CD4-positive, alpha-beta memory T cell (primary cell): ENCODE measurements at regions of chr17 and their contacts with region 1.

Region 1: DNA sequence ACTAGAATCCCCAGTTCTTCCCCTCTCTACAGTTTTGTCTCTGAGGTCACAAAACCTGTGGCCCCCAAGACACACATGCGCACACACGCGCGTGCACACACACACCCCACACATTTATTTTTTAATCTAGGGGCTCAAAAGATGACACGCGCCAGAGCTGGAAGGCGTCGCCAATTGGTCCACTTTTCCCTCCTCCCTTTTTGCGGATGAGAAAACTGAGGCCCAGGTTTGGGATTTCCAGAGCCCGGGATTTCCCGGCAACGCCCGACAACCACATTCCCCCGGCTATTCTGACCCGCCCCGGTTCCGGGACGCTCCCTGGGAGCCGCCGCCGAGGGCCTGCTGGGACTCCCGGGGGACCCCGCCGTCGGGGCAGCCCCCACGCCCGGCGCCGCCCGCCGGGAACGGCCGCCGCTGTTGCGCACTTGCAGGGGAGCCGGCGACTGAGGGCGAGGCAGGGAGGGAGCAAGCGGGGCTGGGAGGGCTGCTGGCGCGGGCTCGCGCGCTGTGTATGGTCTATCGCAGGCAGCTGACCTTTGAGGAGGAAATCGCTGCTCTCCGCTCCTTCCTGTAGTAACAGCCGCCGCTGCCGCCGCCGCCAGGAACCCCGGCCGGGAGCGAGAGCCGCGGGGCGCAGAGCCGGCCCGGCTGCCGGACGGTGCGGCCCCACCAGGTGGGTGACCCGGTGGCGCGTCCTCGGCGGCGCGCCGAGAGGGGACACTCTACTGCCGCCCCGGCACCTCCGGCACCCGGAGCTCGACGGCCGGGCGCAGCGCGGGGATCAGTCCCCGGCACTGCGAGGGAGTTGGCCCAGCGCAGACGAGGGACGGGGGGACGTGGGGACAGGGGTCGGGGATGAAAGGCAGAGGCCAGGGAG is at the start of gene STAT5A:
- DNase-seq: peak; percentile 81 to 89 (median 83)
- H3K4me3 ChIP-seq: peak within 1 kb of the TSS; percentile 86 to 88
- H3K4me3 Mint-ChIP-seq: peak within 1 kb of the TSS; percentile 90 to 97 (median 94)
- H3K27ac ChIP-seq: peak within 1 kb of the TSS; percentile 87
- H3K27ac Mint-ChIP-seq: peak within 1 kb of the TSS; percentile 92 to 99 (median 97)
- H3K4me1 ChIP-seq: peaks cover 48% of the 10 kb centered on the region
- H3K4me1 Mint-ChIP-seq: peaks cover 37 to 62% (median 47%) of the 10 kb centered on the region in 4 donors
- H3K27me3 ChIP-seq: no peaks in the 10 kb centered on the region
- H3K27me3 Mint-ChIP-seq: no peaks in the 10 kb centered on the region
- total RNA-seq, gene STAT5A: 130 to 133 TPM

Region 2: GRCh38 chr17:42183741-42184711 is 104.1 kb before region 1 on chr17:
- CTCF ChIA-PET with region 1: no interaction called
- POLR2A ChIA-PET with region 1: interaction called, 13 read pairs
- intact Hi-C with region 1: loop called (anchors 2 kb)
- DNase-seq: peak; percentile 74 to 84 (median 75)
- H3K4me3 ChIP-seq: peak overlapping the region; percentile 63 to 86
- H3K4me3 Mint-ChIP-seq: peak overlapping the region; percentile 87 to 96 (median 91)
- H3K27ac ChIP-seq: peak overlapping the region; percentile 72
- H3K27ac Mint-ChIP-seq: peak overlapping the region; percentile 78 to 94 (median 88)
- H3K4me1 ChIP-seq: peaks cover 56% of the 10 kb centered on the region
- H3K4me1 Mint-ChIP-seq: peaks cover 21 to 52% (median 35%) of the 10 kb centered on the region in 4 donors
- H3K27me3 ChIP-seq: no peaks in the 10 kb centered on the region
- H3K27me3 Mint-ChIP-seq: peaks cover 0 to 5% of the 10 kb centered on the region in 2 donors

Region 3: GRCh38 chr17:42193969-42194899 is 93.9 kb before region 1 on chr17 and contains the start of gene GHDC:
- CTCF ChIA-PET with region 1: no interaction called
- POLR2A ChIA-PET with region 1: interaction called, 29 read pairs
- intact Hi-C with region 1: no loop called
- DNase-seq: peak; percentile 75 to 84 (median 76)
- H3K4me3 ChIP-seq: peak within 1 kb of the TSS; percentile 64 to 97
- H3K4me3 Mint-ChIP-seq: peak within 1 kb of the TSS; percentile 82 to 96 (median 93)
- H3K27ac ChIP-seq: peak within 1 kb of the TSS; percentile 70
- H3K27ac Mint-ChIP-seq: peak within 1 kb of the TSS; percentile 60 to 95 (median 89)
- H3K4me1 ChIP-seq: peaks cover 20% of the 10 kb centered on the region
- H3K4me1 Mint-ChIP-seq: peaks cover 15 to 25% (median 20%) of the 10 kb centered on the region in 4 donors
- H3K27me3 ChIP-seq: no peaks in the 10 kb centered on the region
- H3K27me3 Mint-ChIP-seq: no peaks in the 10 kb centered on the region
- total RNA-seq, gene GHDC: 23.9 to 25.3 TPM

Region 4: DNA sequence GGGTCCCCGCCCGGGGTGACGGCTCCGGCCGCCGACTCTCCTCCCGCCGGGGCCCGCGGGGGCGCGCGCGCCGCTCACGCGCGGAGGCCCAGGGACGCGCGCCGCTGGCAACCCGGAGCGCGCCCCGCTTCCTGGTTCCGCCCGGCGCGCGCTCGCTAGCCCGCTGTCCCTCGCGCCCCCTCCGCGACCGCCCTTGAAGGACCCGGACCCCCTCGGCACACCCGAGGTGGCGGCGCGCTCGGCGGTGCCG is 11.9 kb before region 1 on chr17 and contains the start of gene STAT5B:
- CTCF ChIA-PET with region 1: interaction called, 5 read pairs
- POLR2A ChIA-PET with region 1: interaction called, 255 read pairs
- intact Hi-C with region 1: loop called (anchors 1 kb)
- DNase-seq: peak in 4 of 5 donors; percentile 73 to 82 (median 76)
- H3K4me3 ChIP-seq: peak within 1 kb of the TSS; percentile 87 to 97
- H3K4me3 Mint-ChIP-seq: peak within 1 kb of the TSS; percentile 97 to 100 (median 98)
- H3K27ac ChIP-seq: peak within 1 kb of the TSS; percentile 92
- H3K27ac Mint-ChIP-seq: peak within 1 kb of the TSS; percentile 97 to 100 (median 99)
- H3K4me1 ChIP-seq: peaks cover 42% of the 10 kb centered on the region
- H3K4me1 Mint-ChIP-seq: peaks cover 31 to 58% (median 46%) of the 10 kb centered on the region in 4 donors
- H3K27me3 ChIP-seq: no peaks in the 10 kb centered on the region
- H3K27me3 Mint-ChIP-seq: no peaks in the 10 kb centered on the region
- total RNA-seq, gene STAT5B: 244 to 261 TPM

Region 5: GRCh38 chr17:42305543-42306384 is 17.6 kb after region 1 on chr17:
- CTCF ChIA-PET with region 1: interaction called, 21 read pairs
- POLR2A ChIA-PET with region 1: interaction called, 19 read pairs
- intact Hi-C with region 1: no loop called
- DNase-seq: peak in 2 of 5 donors; percentile 23 to 42
- H3K4me3 ChIP-seq: no peak overlapping the region
- H3K4me3 Mint-ChIP-seq: peak overlapping the region in 5 of 8 donors; percentile 2 to 68 (median 20)
- H3K27ac ChIP-seq: no peak overlapping the region
- H3K27ac Mint-ChIP-seq: peak overlapping the region; percentile 61 to 88 (median 77)
- H3K4me1 ChIP-seq: peaks cover 16% of the 10 kb centered on the region
- H3K4me1 Mint-ChIP-seq: peaks cover 11 to 35% (median 25%) of the 10 kb centered on the region in 4 donors
- H3K27me3 ChIP-seq: no peaks in the 10 kb centered on the region
- H3K27me3 Mint-ChIP-seq: no peaks in the 10 kb centered on the region

Region 6: GRCh38 chr17:42312285-42313130 is 24.3 kb after region 1 on chr17:
- CTCF ChIA-PET with region 1: interaction called, 21 read pairs
- POLR2A ChIA-PET with region 1: interaction called, 41 read pairs
- intact Hi-C with region 1: no loop called
- DNase-seq: peak; percentile 69 to 80 (median 73)
- H3K4me3 ChIP-seq: peak overlapping the region in 1 of 2 donors; percentile 11
- H3K4me3 Mint-ChIP-seq: peak overlapping the region; percentile 37 to 80 (median 70)
- H3K27ac ChIP-seq: peak overlapping the region; percentile 46
- H3K27ac Mint-ChIP-seq: peak overlapping the region; percentile 75 to 89 (median 86)
- H3K4me1 ChIP-seq: peaks cover 70% of the 10 kb centered on the region
- H3K4me1 Mint-ChIP-seq: peaks cover 40 to 75% (median 53%) of the 10 kb centered on the region in 4 donors
- H3K27me3 ChIP-seq: no peaks in the 10 kb centered on the region
- H3K27me3 Mint-ChIP-seq: no peaks in the 10 kb centered on the region

Region 7: GRCh38 chr17:42354956-42355843 is 67.0 kb after region 1 on chr17:
- CTCF ChIA-PET with region 1: no interaction called
- POLR2A ChIA-PET with region 1: no interaction called
- intact Hi-C with region 1: no loop called
- DNase-seq: no peak
- H3K4me3 ChIP-seq: no peak overlapping the region
- H3K4me3 Mint-ChIP-seq: peak overlapping the region in 2 of 8 donors; percentile 5 to 9
- H3K27ac ChIP-seq: no peak overlapping the region
- H3K27ac Mint-ChIP-seq: peak overlapping the region in 5 of 7 donors; percentile 46 to 89 (median 68)
- H3K4me1 ChIP-seq: peaks cover 26% of the 10 kb centered on the region
- H3K4me1 Mint-ChIP-seq: peaks cover 22 to 51% (median 34%) of the 10 kb centered on the region in 4 donors
- H3K27me3 ChIP-seq: no peaks in the 10 kb centered on the region
- H3K27me3 Mint-ChIP-seq: no peaks in the 10 kb centered on the region